Calu3 (cell line): ENCODE measurements at regions of chr11 and their contacts with region 1.

Region 1: DNA sequence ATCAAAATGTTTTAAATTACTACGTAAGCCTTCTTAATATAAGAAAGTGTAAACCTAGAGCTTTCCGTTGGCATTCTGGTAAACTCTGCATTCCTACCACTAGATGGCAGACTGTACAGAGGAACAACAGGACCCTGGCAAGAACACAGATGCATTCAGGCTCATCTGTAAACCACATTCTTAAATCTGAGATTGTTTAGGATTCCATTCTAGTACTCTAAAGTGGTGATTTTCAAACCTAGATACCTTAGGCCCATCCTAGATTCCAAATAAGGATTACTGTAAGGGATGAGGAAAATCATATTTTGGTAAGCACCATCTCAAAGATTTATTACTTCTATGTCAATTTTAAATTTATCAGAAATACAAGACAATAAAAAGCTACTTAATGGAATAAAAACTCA is 26.9 kb downstream of the PICALM start:
- DNase-seq: peak; percentile 71
- H3K4me3 Mint-ChIP-seq: no peak overlapping the region
- H3K27ac Mint-ChIP-seq: no peak overlapping the region
- H3K4me1 Mint-ChIP-seq: peaks cover 32% of the 10 kb centered on the region
- H3K27me3 Mint-ChIP-seq: no peaks in the 10 kb centered on the region
- CTCF ChIP-seq: peak; percentile 77

Region 2: GRCh38 chr11:85787809-85788805 is 253.9 kb before region 1 on chr11:
- CTCF ChIA-PET with region 1: no interaction called
- intact Hi-C with region 1: no loop called
- DNase-seq: peak; percentile 28
- H3K4me3 Mint-ChIP-seq: no peak overlapping the region
- H3K27ac Mint-ChIP-seq: peak overlapping the region; percentile 66
- H3K4me1 Mint-ChIP-seq: peaks cover 24% of the 10 kb centered on the region
- H3K27me3 Mint-ChIP-seq: no peaks in the 10 kb centered on the region
- CTCF ChIP-seq: no peak

Region 3: DNA sequence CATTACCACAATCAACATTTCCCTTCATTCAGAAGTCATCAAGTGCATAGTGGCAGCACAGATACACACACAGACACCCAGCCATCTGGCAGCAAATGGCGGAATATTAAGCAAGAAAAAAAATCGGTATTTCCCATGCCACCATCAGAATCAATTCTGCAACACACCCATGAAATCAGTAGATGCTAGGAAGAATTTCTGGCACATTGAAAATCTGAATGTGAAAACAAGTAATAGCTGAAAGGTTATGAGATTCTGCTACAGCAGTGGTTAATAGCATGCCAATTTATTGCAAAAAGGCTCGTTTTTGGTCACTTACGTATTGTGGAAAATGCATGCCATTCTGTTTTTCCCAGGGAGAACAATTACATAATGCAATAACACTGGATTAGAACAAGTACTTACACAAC is 64.2 kb before region 1 on chr11:
- CTCF ChIA-PET with region 1: no interaction called
- intact Hi-C with region 1: no loop called
- DNase-seq: no peak
- H3K4me3 Mint-ChIP-seq: no peak overlapping the region
- H3K27ac Mint-ChIP-seq: no peak overlapping the region
- H3K4me1 Mint-ChIP-seq: no peaks in the 10 kb centered on the region
- H3K27me3 Mint-ChIP-seq: no peaks in the 10 kb centered on the region
- CTCF ChIP-seq: no peak

Region 4: DNA sequence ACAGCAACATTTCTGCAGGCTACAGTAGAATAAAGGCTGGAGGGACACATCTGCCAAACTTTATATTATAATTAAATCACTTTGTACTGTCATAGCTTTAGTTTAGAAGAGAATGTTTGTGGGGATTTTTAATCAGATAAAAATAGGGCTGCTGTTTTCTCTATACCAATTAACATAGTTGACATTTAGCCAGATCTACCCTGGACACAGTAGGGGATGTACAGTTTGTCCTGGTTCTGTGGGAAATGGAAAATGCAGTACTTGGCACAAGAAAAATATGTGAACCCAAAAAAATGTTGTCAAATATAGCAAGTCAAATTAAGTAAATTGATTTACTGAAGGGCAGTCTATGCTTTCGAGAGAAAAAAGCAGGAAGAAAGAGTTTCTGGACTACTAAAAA is 47.7 kb after region 1 on chr11:
- CTCF ChIA-PET with region 1: no interaction called
- intact Hi-C with region 1: no loop called
- DNase-seq: no peak
- H3K4me3 Mint-ChIP-seq: no peak overlapping the region
- H3K27ac Mint-ChIP-seq: no peak overlapping the region
- H3K4me1 Mint-ChIP-seq: peaks cover 12% of the 10 kb centered on the region
- H3K27me3 Mint-ChIP-seq: no peaks in the 10 kb centered on the region
- CTCF ChIP-seq: no peak

Region 5: GRCh38 chr11:86193297-86194095 is 151.5 kb after region 1 on chr11:
- CTCF ChIA-PET with region 1: interaction called, 22 read pairs
- intact Hi-C with region 1: loop called (anchors 1 kb)
- DNase-seq: peak; percentile 67
- H3K4me3 Mint-ChIP-seq: peak overlapping the region; percentile 27
- H3K27ac Mint-ChIP-seq: peak overlapping the region; percentile 92
- H3K4me1 Mint-ChIP-seq: peaks cover 27% of the 10 kb centered on the region
- H3K27me3 Mint-ChIP-seq: no peaks in the 10 kb centered on the region
- CTCF ChIP-seq: peak; percentile 27

Region 6: DNA sequence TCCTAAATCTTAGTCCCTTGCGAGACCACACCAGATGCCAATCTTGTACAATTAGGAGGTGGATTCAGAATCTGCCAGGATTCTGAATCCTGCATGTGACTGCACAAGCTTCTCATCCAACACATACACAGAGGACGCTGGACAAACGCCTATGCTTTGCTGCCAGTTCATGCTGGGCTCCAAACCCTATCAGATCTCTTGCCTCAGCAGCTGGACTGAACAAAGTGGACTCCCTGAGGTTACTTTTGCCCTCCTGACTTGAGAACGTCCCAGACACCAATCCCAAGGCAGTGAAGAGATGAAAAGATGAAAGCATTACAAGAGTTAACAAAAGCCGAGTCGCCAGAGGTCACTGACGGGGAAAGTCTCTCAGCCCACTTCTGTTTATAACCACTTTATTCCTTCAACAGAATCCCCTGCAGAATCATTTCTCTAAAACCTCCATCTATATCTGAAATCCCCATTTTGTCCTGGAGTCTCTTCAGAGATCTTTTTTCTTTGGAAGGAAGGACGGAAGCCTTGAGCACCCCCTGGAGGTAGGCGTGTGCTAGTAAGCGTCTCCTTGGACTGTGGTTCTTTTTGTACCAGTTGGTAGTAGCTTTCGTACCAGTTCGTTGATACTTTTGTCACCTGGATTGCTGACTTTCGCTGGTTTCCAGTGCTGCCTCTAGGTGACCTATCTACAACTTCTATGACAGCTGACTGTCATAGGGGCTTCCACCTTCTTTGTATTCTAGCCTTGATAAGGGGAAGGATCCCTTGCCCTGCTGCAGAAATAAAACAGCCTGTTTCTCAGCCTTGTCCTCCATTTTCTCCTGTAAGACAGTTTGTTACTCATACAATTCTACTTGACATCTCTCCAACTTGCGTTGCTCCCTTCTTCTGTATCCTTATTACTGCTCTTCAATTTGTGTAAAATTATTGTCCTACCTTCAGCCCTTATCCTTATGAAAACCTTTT is 176.4 kb after region 1 on chr11:
- CTCF ChIA-PET with region 1: interaction called, 6 read pairs
- intact Hi-C with region 1: loop called (anchors 5 kb)
- DNase-seq: peak; percentile 72
- H3K4me3 Mint-ChIP-seq: peak overlapping the region; percentile 7
- H3K27ac Mint-ChIP-seq: peak overlapping the region; percentile 9
- H3K4me1 Mint-ChIP-seq: peaks cover 22% of the 10 kb centered on the region
- H3K27me3 Mint-ChIP-seq: no peaks in the 10 kb centered on the region
- CTCF ChIP-seq: peak; percentile 53

Region 7: DNA sequence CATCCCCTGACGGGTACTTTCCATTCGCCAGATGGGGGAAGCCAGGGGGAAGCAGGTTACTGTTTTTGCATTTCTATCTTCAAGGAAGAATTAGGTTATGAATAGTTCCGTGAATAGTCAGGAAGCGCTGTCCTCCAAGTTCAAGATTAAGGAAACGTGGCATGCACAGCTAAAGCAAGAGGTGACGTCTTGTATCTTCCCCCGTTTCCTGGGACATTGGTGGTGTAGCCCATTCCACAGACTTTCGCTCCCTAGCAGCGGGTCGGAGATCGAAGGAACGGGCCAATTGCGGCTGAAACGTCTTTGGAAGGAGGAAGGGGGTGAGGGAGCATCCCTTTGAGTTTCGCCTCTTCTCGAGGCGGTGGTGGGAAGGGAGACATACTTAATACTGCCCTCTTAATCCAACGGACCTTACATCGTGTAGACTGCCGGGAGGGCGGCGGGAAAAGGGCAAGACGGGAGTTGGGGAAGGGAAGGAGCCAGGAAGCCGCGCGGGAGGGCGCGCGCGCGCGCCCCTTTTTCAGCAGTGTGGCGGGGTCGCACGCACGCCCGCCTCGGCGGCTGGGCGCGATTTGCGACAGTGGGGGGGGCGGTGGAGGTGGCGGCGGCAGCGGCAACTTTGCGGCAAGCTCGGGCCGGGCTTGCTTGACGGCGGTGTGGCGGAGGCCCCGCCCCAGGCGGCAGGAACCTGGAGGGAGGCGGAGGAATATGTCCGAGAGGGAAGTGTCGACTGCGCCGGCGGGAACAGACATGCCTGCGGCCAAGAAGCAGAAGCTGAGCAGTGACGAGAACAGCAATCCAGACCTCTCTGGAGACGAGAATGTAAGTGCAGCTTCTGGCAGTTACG is 202.8 kb after region 1 on chr11 and contains the start of gene EED:
- CTCF ChIA-PET with region 1: no interaction called
- intact Hi-C with region 1: no loop called
- DNase-seq: peak; percentile 94
- H3K4me3 Mint-ChIP-seq: no peak within 1 kb of the TSS
- H3K27ac Mint-ChIP-seq: no peak within 1 kb of the TSS
- H3K4me1 Mint-ChIP-seq: peaks cover 23% of the 10 kb centered on the region
- H3K27me3 Mint-ChIP-seq: no peaks in the 10 kb centered on the region
- CTCF ChIP-seq: no peak
- total RNA-seq, gene EED: 24.2 and 24.4 TPM in 2 replicates